Left lung (tissue), 14 donors: ENCODE measurements at regions of chr6 and their contacts with region 1.

Region 1: GRCh38 chr6:148952147-148953035 is 205.6 kb downstream of the UST start:
- DNase-seq: peak in 1 of 4 donors; percentile 54
- ATAC-seq: no peak
- H3K4me3 ChIP-seq: no peak overlapping the region
- H3K27ac ChIP-seq: no peak overlapping the region
- H3K4me1 ChIP-seq: no peaks in the 10 kb centered on the region
- H3K27me3 ChIP-seq: no peaks in the 10 kb centered on the region
- CTCF ChIP-seq: no peak

Region 2: DNA sequence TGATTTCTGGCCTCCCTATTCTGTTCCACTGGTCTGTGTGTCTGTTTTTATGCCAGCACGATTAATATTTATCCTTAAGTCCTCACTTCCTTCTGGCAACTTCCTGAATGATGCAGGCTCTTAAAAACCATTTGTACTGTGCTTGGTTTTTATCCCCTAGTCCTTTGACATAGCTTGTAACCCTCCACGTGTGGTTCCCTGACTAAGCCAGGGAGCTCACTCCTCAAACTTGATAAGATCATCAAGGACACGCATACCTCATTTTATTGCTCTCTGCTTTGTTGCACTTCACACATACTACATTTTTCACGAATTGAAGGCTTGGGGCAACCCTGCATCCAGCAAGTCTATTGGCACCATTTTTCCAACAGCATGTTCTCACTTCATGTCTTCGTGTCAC is 371.9 kb before region 1 on chr6:
- intact Hi-C with region 1: loop called in 1 of 2 experiments (anchors 10 kb)
- DNase-seq: no peak
- ATAC-seq: no peak
- H3K4me3 ChIP-seq: no peak overlapping the region
- H3K27ac ChIP-seq: no peak overlapping the region
- H3K4me1 ChIP-seq: no peaks in the 10 kb centered on the region
- H3K27me3 ChIP-seq: no peaks in the 10 kb centered on the region
- CTCF ChIP-seq: no peak

Region 3: GRCh38 chr6:148746363-148747144 is 205.8 kb before region 1 on chr6 and contains the start of gene UST:
- intact Hi-C with region 1: loop called in 1 of 2 experiments (anchors 10 kb)
- DNase-seq: peak; percentile 83 to 95 (median 90)
- ATAC-seq: peak; percentile 83
- H3K4me3 ChIP-seq: peak within 1 kb of the TSS; percentile 51 to 69
- H3K27ac ChIP-seq: peak within 1 kb of the TSS; percentile 68 to 92
- H3K4me1 ChIP-seq: peaks cover 0 to 25% of the 10 kb centered on the region in 2 donors
- H3K27me3 ChIP-seq: peaks cover 0 to 65% of the 10 kb centered on the region in 2 donors
- CTCF ChIP-seq: peak in 1 of 2 donors; percentile 20
- polyA plus RNA-seq, gene UST: 7.4 to 9.8 (median 8.8) TPM

Region 4: GRCh38 chr6:149094156-149094555 is 141.8 kb after region 1 on chr6:
- intact Hi-C with region 1: no loop called
- DNase-seq: no peak
- ATAC-seq: peak; percentile 60
- H3K4me3 ChIP-seq: no peak overlapping the region
- H3K27ac ChIP-seq: no peak overlapping the region
- H3K4me1 ChIP-seq: peaks cover 0 to 9% of the 10 kb centered on the region in 2 donors
- H3K27me3 ChIP-seq: no peaks in the 10 kb centered on the region
- CTCF ChIP-seq: no peak